B cell (primary cell): ENCODE measurements at regions of chr11 and their contacts with region 1.

Region 1: GRCh38 chr11:14300661-14301304 is 58.2 kb downstream of the RRAS2 start:
- DNase-seq: peak; percentile 75
- ATAC-seq: peak; percentile 93
- H3K4me3 ChIP-seq: no peak overlapping the region
- H3K4me3 Mint-ChIP-seq: no peak overlapping the region
- H3K27ac ChIP-seq: no peak overlapping the region
- H3K27ac Mint-ChIP-seq: no peak overlapping the region
- H3K4me1 ChIP-seq: peaks cover 45 to 64% of the 10 kb centered on the region in 2 donors
- H3K4me1 Mint-ChIP-seq: peaks cover 59% of the 10 kb centered on the region
- H3K27me3 ChIP-seq: no peaks in the 10 kb centered on the region
- H3K27me3 Mint-ChIP-seq: no peaks in the 10 kb centered on the region
- CTCF ChIP-seq: peak; percentile 80

Region 2: GRCh38 chr11:14370496-14370895 is 69.7 kb after region 1 on chr11:
- CTCF ChIA-PET with region 1: interaction called, 19 read pairs
- POLR2A ChIA-PET with region 1: no interaction called
- intact Hi-C with region 1: no loop called
- DNase-seq: no peak
- ATAC-seq: no peak
- H3K4me3 ChIP-seq: no peak overlapping the region
- H3K4me3 Mint-ChIP-seq: no peak overlapping the region
- H3K27ac ChIP-seq: no peak overlapping the region
- H3K27ac Mint-ChIP-seq: no peak overlapping the region
- H3K4me1 ChIP-seq: peaks cover 18 to 20% of the 10 kb centered on the region in 2 donors
- H3K4me1 Mint-ChIP-seq: peaks cover 30% of the 10 kb centered on the region
- H3K27me3 ChIP-seq: no peaks in the 10 kb centered on the region
- H3K27me3 Mint-ChIP-seq: no peaks in the 10 kb centered on the region
- CTCF ChIP-seq: no peak

Region 3: GRCh38 chr11:14386895-14387480 is 86.2 kb after region 1 on chr11:
- CTCF ChIA-PET with region 1: interaction called, 14 read pairs
- POLR2A ChIA-PET with region 1: no interaction called
- intact Hi-C with region 1: no loop called
- DNase-seq: no peak
- ATAC-seq: no peak
- H3K4me3 ChIP-seq: no peak overlapping the region
- H3K4me3 Mint-ChIP-seq: no peak overlapping the region
- H3K27ac ChIP-seq: no peak overlapping the region
- H3K27ac Mint-ChIP-seq: no peak overlapping the region
- H3K4me1 ChIP-seq: peaks cover 0 to under 1% of the 10 kb centered on the region in 2 donors
- H3K4me1 Mint-ChIP-seq: no peaks in the 10 kb centered on the region
- H3K27me3 ChIP-seq: peaks cover 0 to 4% (median under 1%) of the 10 kb centered on the region in 4 experiments
- H3K27me3 Mint-ChIP-seq: peaks cover 9% of the 10 kb centered on the region
- CTCF ChIP-seq: no peak

Region 4: GRCh38 chr11:14422052-14422813 is 121.5 kb after region 1 on chr11:
- CTCF ChIA-PET with region 1: interaction called, 73 read pairs
- POLR2A ChIA-PET with region 1: no interaction called
- intact Hi-C with region 1: loop called (anchors 1 kb)
- DNase-seq: no peak
- ATAC-seq: no peak
- H3K4me3 ChIP-seq: no peak overlapping the region
- H3K4me3 Mint-ChIP-seq: no peak overlapping the region
- H3K27ac ChIP-seq: no peak overlapping the region
- H3K27ac Mint-ChIP-seq: no peak overlapping the region
- H3K4me1 ChIP-seq: peaks cover 8 to 17% of the 10 kb centered on the region in 2 donors
- H3K4me1 Mint-ChIP-seq: peaks cover 4% of the 10 kb centered on the region
- H3K27me3 ChIP-seq: peaks cover 0 to 3% (median 0%) of the 10 kb centered on the region in 4 experiments
- H3K27me3 Mint-ChIP-seq: no peaks in the 10 kb centered on the region
- CTCF ChIP-seq: no peak

Region 5: DNA sequence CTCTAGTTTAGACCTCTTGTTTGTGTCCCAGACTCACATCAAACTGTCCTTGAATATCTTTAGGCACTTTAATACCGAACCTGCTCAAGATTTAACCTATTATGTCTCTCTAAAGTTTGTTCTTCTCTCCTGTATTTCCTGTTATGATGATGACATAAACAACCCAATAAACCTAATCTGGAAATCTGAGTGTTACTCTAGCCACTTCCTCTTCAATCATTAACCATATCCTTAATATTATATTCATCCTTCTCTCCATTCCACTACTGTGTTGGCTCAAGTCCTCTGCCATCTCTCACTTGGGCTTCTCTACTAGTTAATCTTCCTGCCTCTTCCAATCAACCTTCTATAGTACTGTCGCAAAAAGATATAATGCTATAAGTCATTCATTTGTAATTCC is 162.8 kb after region 1 on chr11:
- CTCF ChIA-PET with region 1: interaction called, 18 read pairs
- POLR2A ChIA-PET with region 1: no interaction called
- intact Hi-C with region 1: no loop called
- DNase-seq: no peak
- ATAC-seq: no peak
- H3K4me3 ChIP-seq: no peak overlapping the region
- H3K4me3 Mint-ChIP-seq: no peak overlapping the region
- H3K27ac ChIP-seq: no peak overlapping the region
- H3K27ac Mint-ChIP-seq: no peak overlapping the region
- H3K4me1 ChIP-seq: no peaks in the 10 kb centered on the region
- H3K4me1 Mint-ChIP-seq: peaks cover 2% of the 10 kb centered on the region
- H3K27me3 ChIP-seq: no peaks in the 10 kb centered on the region
- H3K27me3 Mint-ChIP-seq: no peaks in the 10 kb centered on the region
- CTCF ChIP-seq: no peak